ENCODE measurements at regions of chr6 and their contacts with region 1.

Region 1: DNA sequence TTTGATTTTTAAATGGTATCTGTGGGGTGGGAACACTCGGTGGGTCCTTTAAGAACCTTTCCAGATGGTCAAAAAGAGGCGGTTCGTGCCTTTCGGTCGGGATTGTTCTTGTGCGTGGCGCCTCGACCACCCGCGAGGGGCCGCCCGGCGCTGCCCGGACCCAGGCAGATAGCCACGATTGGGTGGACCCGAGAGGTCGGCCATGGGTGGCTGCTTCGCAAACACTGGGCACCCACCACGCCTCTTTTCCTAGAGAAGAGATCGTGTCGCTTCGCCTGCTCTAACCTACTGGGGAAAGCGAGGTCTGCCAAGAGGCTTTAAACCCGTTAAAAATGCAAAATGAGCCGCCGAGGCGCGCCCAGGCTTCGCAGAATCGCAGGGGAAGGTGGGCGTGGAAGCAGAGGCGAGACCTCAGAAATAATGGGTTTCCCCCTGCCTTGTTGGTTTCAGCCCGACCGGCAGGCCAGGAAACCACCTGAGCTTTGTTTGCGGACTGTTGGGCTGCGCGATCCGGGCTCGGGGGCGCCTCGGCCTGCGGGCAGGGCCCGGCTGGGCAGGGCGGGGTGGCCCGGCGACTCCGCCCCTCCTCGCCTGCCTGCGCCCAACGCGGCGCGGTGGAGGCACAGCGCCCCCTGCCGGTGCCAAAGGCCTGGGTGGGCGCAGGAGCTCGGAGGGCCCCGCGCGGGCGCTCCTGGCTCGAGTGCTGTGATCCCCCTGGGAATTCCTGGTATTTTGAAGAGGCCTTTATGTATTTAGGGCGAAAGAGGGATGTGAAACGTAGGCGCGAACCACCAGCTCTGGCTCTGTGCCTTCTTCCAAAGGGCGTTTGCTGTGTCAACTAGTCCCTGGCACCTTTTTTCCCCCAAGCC is 1.6 kb downstream of the MARCKS start:
- H3K4me3 Mint-ChIP-seq: no peak overlapping the region
- H3K27ac Mint-ChIP-seq: no peak overlapping the region
- H3K4me1 Mint-ChIP-seq: peaks cover 17% of the 10 kb centered on the region
- H3K27me3 Mint-ChIP-seq: peaks cover 5% of the 10 kb centered on the region

Region 2: GRCh38 chr6:113306552-113307145 is 552.1 kb before region 1 on chr6:
- intact Hi-C with region 1: loop called (anchors 2 kb)
- H3K4me3 Mint-ChIP-seq: no peak overlapping the region
- H3K27ac Mint-ChIP-seq: no peak overlapping the region
- H3K4me1 Mint-ChIP-seq: no peaks in the 10 kb centered on the region
- H3K27me3 Mint-ChIP-seq: peaks cover 3% of the 10 kb centered on the region

Region 3: GRCh38 chr6:113632220-113632864 is 226.4 kb before region 1 on chr6:
- intact Hi-C with region 1: loop called (anchors 2 kb)
- H3K4me3 Mint-ChIP-seq: peak overlapping the region; percentile 48
- H3K27ac Mint-ChIP-seq: peak overlapping the region; percentile 95
- H3K4me1 Mint-ChIP-seq: peaks cover 58% of the 10 kb centered on the region
- H3K27me3 Mint-ChIP-seq: no peaks in the 10 kb centered on the region

Region 4: GRCh38 chr6:113684382-113684901 is 174.3 kb before region 1 on chr6:
- intact Hi-C with region 1: no loop called
- H3K4me3 Mint-ChIP-seq: no peak overlapping the region
- H3K27ac Mint-ChIP-seq: no peak overlapping the region
- H3K4me1 Mint-ChIP-seq: peaks cover 5% of the 10 kb centered on the region
- H3K27me3 Mint-ChIP-seq: no peaks in the 10 kb centered on the region

Region 5: DNA sequence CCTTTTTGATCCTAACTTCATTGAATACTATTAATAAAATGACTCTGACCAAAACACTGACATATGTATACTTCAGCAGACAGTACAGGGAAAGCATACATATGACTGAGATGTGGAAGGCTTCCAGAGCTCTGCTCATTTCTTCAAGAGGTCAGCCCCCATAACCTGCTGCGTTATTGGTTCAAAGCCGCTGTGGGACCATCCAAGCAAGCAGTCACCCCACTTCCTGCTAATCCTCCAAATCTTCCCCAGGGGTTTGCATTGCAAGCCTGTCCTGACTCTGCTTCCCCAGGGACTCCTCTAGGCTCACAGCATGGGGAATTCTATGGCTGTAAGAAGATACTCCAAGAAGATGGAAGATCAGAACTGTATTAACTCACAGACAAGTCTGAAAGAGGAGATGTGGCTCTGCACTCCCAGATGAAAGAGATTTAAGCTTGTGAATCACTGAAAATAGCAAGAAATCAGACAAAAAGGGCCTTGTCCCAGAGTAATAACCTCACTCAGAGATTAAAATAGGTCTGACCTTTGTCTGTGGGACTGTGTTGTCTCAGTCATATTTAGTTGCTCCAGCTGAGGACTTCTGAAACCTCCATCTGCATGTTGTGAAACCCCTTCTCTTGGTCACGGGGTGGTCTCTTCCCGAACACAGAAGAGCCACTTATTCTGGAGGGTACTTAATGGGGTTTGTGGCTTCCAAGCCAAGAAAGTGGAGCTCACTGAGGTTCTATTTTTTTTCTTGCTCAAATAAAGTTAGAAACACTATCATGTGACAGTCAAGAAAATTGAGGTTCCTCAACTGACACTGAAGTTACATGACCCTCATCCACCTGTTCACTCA is 103.0 kb before region 1 on chr6:
- intact Hi-C with region 1: loop called (anchors 5 kb)
- H3K4me3 Mint-ChIP-seq: no peak overlapping the region
- H3K27ac Mint-ChIP-seq: no peak overlapping the region
- H3K4me1 Mint-ChIP-seq: peaks cover 50% of the 10 kb centered on the region
- H3K27me3 Mint-ChIP-seq: no peaks in the 10 kb centered on the region

Measured in dendritic cell treated with granulocyte-macrophage colony-stimulating factor and Interleukin-4, amounts not matched to agents 40 ng/mL and 50 ng/mL, for 4 days (primary cell).